B cell (primary cell): ENCODE measurements at regions of chr2 and their contacts with region 1.

Region 1: DNA sequence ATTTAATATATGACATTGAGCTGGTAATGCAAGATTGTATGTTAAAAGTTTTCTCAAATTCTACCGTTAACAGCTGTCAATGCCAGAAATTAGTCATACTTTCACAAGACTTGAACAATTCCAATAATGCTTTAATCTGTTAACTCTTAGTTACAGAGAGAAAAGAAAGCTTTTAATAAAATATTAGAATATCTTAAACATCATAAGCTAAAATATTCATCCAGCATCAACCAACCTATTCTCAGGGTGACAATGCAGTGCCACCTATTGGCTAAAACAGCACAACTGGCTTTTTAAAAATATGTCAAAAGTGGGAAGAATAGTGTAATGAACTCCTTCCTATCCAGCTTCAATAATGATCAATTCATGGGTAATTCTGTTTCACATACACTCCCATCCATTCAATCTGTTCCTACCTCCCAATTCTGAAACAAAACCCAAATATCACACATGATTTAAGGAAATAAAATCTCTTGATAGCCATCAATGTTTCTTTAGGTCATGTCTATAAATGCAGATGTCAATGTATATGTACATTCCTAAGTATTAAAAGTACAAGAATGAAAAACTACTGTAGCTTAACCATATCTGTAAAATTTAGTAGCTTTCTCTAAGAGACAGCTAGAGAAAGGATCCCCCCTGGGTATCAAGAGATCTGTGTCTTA is 79.8 kb upstream of the CCDC141 start:
- DNase-seq: peak; percentile 37
- ATAC-seq: no peak
- H3K4me3 ChIP-seq: no peak overlapping the region
- H3K4me3 Mint-ChIP-seq: no peak overlapping the region
- H3K27ac ChIP-seq: no peak overlapping the region
- H3K27ac Mint-ChIP-seq: no peak overlapping the region
- H3K4me1 ChIP-seq: no peaks in the 10 kb centered on the region
- H3K4me1 Mint-ChIP-seq: no peaks in the 10 kb centered on the region
- H3K27me3 ChIP-seq: no peaks in the 10 kb centered on the region
- H3K27me3 Mint-ChIP-seq: no peaks in the 10 kb centered on the region
- CTCF ChIP-seq: peak; percentile 82

Region 2: GRCh38 chr2:178796079-178796677 is 333.5 kb before region 1 on chr2:
- CTCF ChIA-PET with region 1: interaction called, 13 read pairs
- POLR2A ChIA-PET with region 1: no interaction called
- intact Hi-C with region 1: loop called (anchors 5 kb)
- DNase-seq: peak; percentile 47
- ATAC-seq: no peak
- H3K4me3 ChIP-seq: no peak overlapping the region
- H3K4me3 Mint-ChIP-seq: no peak overlapping the region
- H3K27ac ChIP-seq: no peak overlapping the region
- H3K27ac Mint-ChIP-seq: no peak overlapping the region
- H3K4me1 ChIP-seq: no peaks in the 10 kb centered on the region
- H3K4me1 Mint-ChIP-seq: no peaks in the 10 kb centered on the region
- H3K27me3 ChIP-seq: no peaks in the 10 kb centered on the region
- H3K27me3 Mint-ChIP-seq: no peaks in the 10 kb centered on the region
- CTCF ChIP-seq: peak; percentile 80

Region 3: GRCh38 chr2:178914259-178914849 is 215.4 kb before region 1 on chr2:
- CTCF ChIA-PET with region 1: interaction called, 28 read pairs
- POLR2A ChIA-PET with region 1: no interaction called
- intact Hi-C with region 1: no loop called
- DNase-seq: peak; percentile 70
- ATAC-seq: peak; percentile 79
- H3K4me3 ChIP-seq: no peak overlapping the region
- H3K4me3 Mint-ChIP-seq: no peak overlapping the region
- H3K27ac ChIP-seq: no peak overlapping the region
- H3K27ac Mint-ChIP-seq: no peak overlapping the region
- H3K4me1 ChIP-seq: no peaks in the 10 kb centered on the region
- H3K4me1 Mint-ChIP-seq: peaks cover 9% of the 10 kb centered on the region
- H3K27me3 ChIP-seq: no peaks in the 10 kb centered on the region
- H3K27me3 Mint-ChIP-seq: no peaks in the 10 kb centered on the region
- CTCF ChIP-seq: peak; percentile 90

Region 4: GRCh38 chr2:178949584-178949983 is 180.1 kb before region 1 on chr2:
- CTCF ChIA-PET with region 1: interaction called, 15 read pairs
- POLR2A ChIA-PET with region 1: no interaction called
- intact Hi-C with region 1: no loop called
- DNase-seq: no peak
- ATAC-seq: no peak
- H3K4me3 ChIP-seq: no peak overlapping the region
- H3K4me3 Mint-ChIP-seq: no peak overlapping the region
- H3K27ac ChIP-seq: no peak overlapping the region
- H3K27ac Mint-ChIP-seq: no peak overlapping the region
- H3K4me1 ChIP-seq: no peaks in the 10 kb centered on the region
- H3K4me1 Mint-ChIP-seq: no peaks in the 10 kb centered on the region
- H3K27me3 ChIP-seq: no peaks in the 10 kb centered on the region
- H3K27me3 Mint-ChIP-seq: no peaks in the 10 kb centered on the region
- CTCF ChIP-seq: no peak

Region 5: GRCh38 chr2:178976351-178976750 is 153.4 kb before region 1 on chr2:
- CTCF ChIA-PET with region 1: interaction called, 19 read pairs
- POLR2A ChIA-PET with region 1: no interaction called
- intact Hi-C with region 1: no loop called
- DNase-seq: no peak
- ATAC-seq: no peak
- H3K4me3 ChIP-seq: no peak overlapping the region
- H3K4me3 Mint-ChIP-seq: no peak overlapping the region
- H3K27ac ChIP-seq: no peak overlapping the region
- H3K27ac Mint-ChIP-seq: no peak overlapping the region
- H3K4me1 ChIP-seq: no peaks in the 10 kb centered on the region
- H3K4me1 Mint-ChIP-seq: no peaks in the 10 kb centered on the region
- H3K27me3 ChIP-seq: no peaks in the 10 kb centered on the region
- H3K27me3 Mint-ChIP-seq: no peaks in the 10 kb centered on the region
- CTCF ChIP-seq: no peak

Region 6: GRCh38 chr2:179031731-179032408 is 97.8 kb before region 1 on chr2:
- CTCF ChIA-PET with region 1: interaction called, 12 read pairs
- POLR2A ChIA-PET with region 1: no interaction called
- intact Hi-C with region 1: no loop called
- DNase-seq: peak; percentile 50
- ATAC-seq: peak; percentile 76
- H3K4me3 ChIP-seq: peak overlapping the region; percentile 5 to 58 (median 33)
- H3K4me3 Mint-ChIP-seq: peak overlapping the region; percentile 86
- H3K27ac ChIP-seq: peak overlapping the region; percentile 59 to 70
- H3K27ac Mint-ChIP-seq: peak overlapping the region; percentile 96
- H3K4me1 ChIP-seq: peaks cover 13 to 14% of the 10 kb centered on the region in 2 donors
- H3K4me1 Mint-ChIP-seq: peaks cover 24% of the 10 kb centered on the region
- H3K27me3 ChIP-seq: no peaks in the 10 kb centered on the region
- H3K27me3 Mint-ChIP-seq: no peaks in the 10 kb centered on the region
- CTCF ChIP-seq: no peak